Heart left ventricle (tissue), 16 donors: ENCODE measurements at regions of chr18 and their contacts with region 1.

Region 1: DNA sequence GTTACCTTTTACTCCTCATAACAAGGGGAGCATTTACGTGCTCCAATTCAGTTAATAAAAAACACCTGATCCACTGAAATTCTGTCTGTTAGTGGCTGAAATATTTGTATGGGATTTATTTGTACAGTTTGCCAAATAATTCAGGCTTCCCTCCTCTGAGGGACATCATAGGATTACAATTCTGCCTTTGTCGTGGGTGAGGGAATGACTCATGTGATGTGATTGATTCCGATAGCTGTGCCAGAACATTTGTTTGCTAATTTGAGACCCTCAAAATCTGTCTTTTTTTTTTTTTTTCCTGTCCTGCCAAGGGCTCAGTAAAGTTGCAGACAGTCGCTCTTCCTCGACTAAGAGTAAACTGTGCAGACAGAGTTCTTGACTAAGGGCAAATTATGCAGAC is 612.6 kb upstream of the CDH2 start:
- DNase-seq: no peak
- ATAC-seq: no peak
- H3K4me3 ChIP-seq: no peak overlapping the region
- H3K27ac ChIP-seq: no peak overlapping the region
- H3K4me1 ChIP-seq: peaks cover 0 to 3% (median 0%) of the 10 kb centered on the region in 12 donors
- H3K27me3 ChIP-seq: no peaks in the 10 kb centered on the region
- CTCF ChIP-seq: no peak
- POLR2A ChIP-seq: no peak

Region 2: GRCh38 chr18:28003451-28003850 is 786.1 kb before region 1 on chr18:
- intact Hi-C with region 1: no loop called
- DNase-seq: peak in 1 of 5 donors; percentile 28
- ATAC-seq: peak; percentile 72 to 84 (median 82)
- H3K4me3 ChIP-seq: no peak overlapping the region
- H3K27ac ChIP-seq: peak overlapping the region in 10 of 12 donors; percentile 15 to 68 (median 49)
- H3K4me1 ChIP-seq: peaks cover 0 to 30% (median 8%) of the 10 kb centered on the region in 12 donors
- H3K27me3 ChIP-seq: no peaks in the 10 kb centered on the region
- CTCF ChIP-seq: no peak
- POLR2A ChIP-seq: no peak

Region 3: GRCh38 chr18:28705482-28705881 is 84.0 kb before region 1 on chr18:
- intact Hi-C with region 1: loop called in 1 of 10 experiments (anchors 10 kb)
- DNase-seq: no peak
- ATAC-seq: no peak
- H3K4me3 ChIP-seq: no peak overlapping the region
- H3K27ac ChIP-seq: no peak overlapping the region
- H3K4me1 ChIP-seq: no peaks in the 10 kb centered on the region
- H3K27me3 ChIP-seq: no peaks in the 10 kb centered on the region
- CTCF ChIP-seq: no peak
- POLR2A ChIP-seq: no peak